GM10248 (cell line): ENCODE measurements at regions of chr21 and their contacts with region 1.

Region 1: GRCh38 chr21:44510508-44511210 is 29.3 kb downstream of the KRTAP10-1 start:
- DNase-seq: peak; percentile 85
- CTCF ChIP-seq: peak; percentile 77

Region 2: GRCh38 chr21:44521623-44522455 is 11.2 kb after region 1 on chr21:
- CTCF ChIA-PET with region 1: interaction called, 11 read pairs
- POLR2A ChIA-PET with region 1: no interaction called
- DNase-seq: no peak
- CTCF ChIP-seq: no peak